GM10248 (cell line): ENCODE measurements at regions of chr17 and their contacts with region 1.

Region 1: GRCh38 chr17:4565209-4566141 is 5.1 kb upstream of the GGT6 start:
- DNase-seq: peak; percentile 69
- CTCF ChIP-seq: peak; percentile 91

Region 2: GRCh38 chr17:4576729-4577322 is 11.4 kb after region 1 on chr17:
- CTCF ChIA-PET with region 1: interaction called, 23 read pairs
- POLR2A ChIA-PET with region 1: no interaction called
- DNase-seq: no peak
- CTCF ChIP-seq: no peak

Region 3: GRCh38 chr17:4594931-4595684 is 29.6 kb after region 1 on chr17:
- CTCF ChIA-PET with region 1: interaction called, 18 read pairs
- POLR2A ChIA-PET with region 1: no interaction called
- DNase-seq: peak; percentile 66
- CTCF ChIP-seq: peak; percentile 25

Region 4: DNA sequence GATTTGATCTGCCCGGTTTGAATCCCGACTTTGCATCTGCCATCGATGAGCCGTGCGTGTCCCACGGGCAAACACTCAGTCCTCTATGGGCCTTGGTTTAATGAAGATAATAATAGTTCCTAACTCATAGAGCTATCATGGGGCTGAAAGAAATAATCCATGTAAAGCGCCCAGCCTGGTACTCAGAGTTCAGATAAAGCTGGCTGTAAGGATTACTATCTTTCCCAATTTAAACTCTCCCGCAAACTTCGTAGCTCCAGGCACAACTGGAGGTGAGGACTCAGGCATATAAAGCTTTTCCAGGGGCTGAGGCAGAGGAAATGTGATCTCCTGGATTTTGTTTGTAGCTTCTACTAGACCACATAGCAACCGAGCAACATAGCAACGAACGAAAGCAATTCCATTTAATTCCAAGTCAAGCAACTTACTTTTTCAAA is 59.7 kb after region 1 on chr17:
- CTCF ChIA-PET with region 1: interaction called, 50 read pairs
- POLR2A ChIA-PET with region 1: interaction called, 4 read pairs
- DNase-seq: no peak
- CTCF ChIP-seq: no peak

Region 5: GRCh38 chr17:4891411-4892342 is 326.2 kb after region 1 on chr17:
- CTCF ChIA-PET with region 1: interaction called, 22 read pairs
- POLR2A ChIA-PET with region 1: no interaction called
- DNase-seq: no peak
- CTCF ChIP-seq: no peak